Activated T-helper 1 cell treated with anti-CD3 and anti-CD28 coated beads, Interleukin-12 subunit alpha, Interleukin-12 subunit beta, Interleukin-2, Interleukin-4 antibody, amounts not matched to agents 30 ng/mL and 10 ng/mL and 1 ng/mL, durations not matched to agents 14 hours and 24 hours and 36 hours (primary cell): ENCODE measurements at regions of chr6 and their contacts with region 1.

Region 1: GRCh38 chr6:21873562-21873961 is 280.0 kb downstream of the SOX4 start:
- DNase-seq: no peak
- H3K4me3 Mint-ChIP-seq: no peak overlapping the region
- H3K27ac Mint-ChIP-seq: no peak overlapping the region
- H3K4me1 Mint-ChIP-seq: peaks cover 31% of the 10 kb centered on the region
- H3K27me3 Mint-ChIP-seq: no peaks in the 10 kb centered on the region

Region 2: GRCh38 chr6:20534295-20535262 is 1339.0 kb before region 1 on chr6 and contains the start of gene CDKAL1:
- intact Hi-C with region 1: loop called (anchors 10 kb)
- DNase-seq: peak; percentile 91
- H3K4me3 Mint-ChIP-seq: peak within 1 kb of the TSS; percentile 98
- H3K27ac Mint-ChIP-seq: peak within 1 kb of the TSS; percentile 97
- H3K4me1 Mint-ChIP-seq: peaks cover 54% of the 10 kb centered on the region
- H3K27me3 Mint-ChIP-seq: peaks cover 3% of the 10 kb centered on the region
- total RNA-seq, gene CDKAL1: 32.2 and 32.6 TPM in 2 replicates

Region 3: DNA sequence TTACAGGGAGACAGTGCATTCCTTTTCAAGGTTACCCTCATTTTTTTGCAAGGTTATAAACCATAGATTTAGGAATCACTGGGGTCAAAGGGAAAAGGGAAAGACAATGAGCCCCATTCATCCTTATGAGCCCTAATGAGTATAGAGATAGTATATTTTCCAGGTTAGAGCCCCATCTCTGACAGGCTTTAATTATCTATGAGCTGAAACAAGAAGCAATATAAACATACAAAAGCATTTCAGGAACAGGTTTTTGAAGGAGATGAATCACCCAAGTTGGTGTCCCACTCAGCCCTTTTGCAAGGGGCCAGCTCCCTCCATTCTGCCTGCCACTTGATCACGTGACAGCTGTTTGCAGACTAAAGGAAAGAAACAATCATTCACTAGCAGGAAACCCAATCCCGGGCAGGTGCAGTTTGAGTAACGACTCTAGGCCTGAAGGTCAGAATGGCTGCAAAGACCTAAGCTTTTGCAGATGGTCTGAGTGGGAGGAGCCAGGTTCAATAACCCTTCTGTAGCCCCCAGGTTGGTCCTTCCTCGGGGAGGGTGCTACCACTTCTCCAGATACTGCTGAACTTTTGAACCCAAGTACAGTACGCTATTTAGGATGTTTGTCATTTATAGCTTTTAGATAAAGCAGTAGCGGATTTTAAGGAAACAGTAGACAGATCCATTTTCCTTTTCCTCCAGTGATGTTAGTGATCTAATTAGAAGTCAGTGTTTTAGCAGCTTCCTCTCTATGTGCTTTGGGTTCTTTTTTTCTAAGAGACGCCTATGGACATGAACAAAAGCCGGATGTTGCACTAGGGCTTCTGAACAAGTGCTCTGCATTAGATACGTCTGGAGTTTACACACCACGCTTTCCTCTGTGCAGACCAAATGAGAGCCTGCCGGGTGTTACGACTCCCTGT is 26.8 kb before region 1 on chr6:
- intact Hi-C with region 1: loop called (anchors 1 kb)
- DNase-seq: no peak
- H3K4me3 Mint-ChIP-seq: no peak overlapping the region
- H3K27ac Mint-ChIP-seq: peak overlapping the region; percentile 13
- H3K4me1 Mint-ChIP-seq: peaks cover 21% of the 10 kb centered on the region
- H3K27me3 Mint-ChIP-seq: no peaks in the 10 kb centered on the region

Region 4: GRCh38 chr6:21928827-21929226 is 55.3 kb after region 1 on chr6:
- intact Hi-C with region 1: loop called (anchors 5 kb)
- DNase-seq: no peak
- H3K4me3 Mint-ChIP-seq: no peak overlapping the region
- H3K27ac Mint-ChIP-seq: no peak overlapping the region
- H3K4me1 Mint-ChIP-seq: peaks cover 33% of the 10 kb centered on the region
- H3K27me3 Mint-ChIP-seq: no peaks in the 10 kb centered on the region

Region 5: GRCh38 chr6:22068561-22069305 is 195.2 kb after region 1 on chr6:
- intact Hi-C with region 1: loop called (anchors 2 kb)
- DNase-seq: no peak
- H3K4me3 Mint-ChIP-seq: no peak overlapping the region
- H3K27ac Mint-ChIP-seq: peak overlapping the region; percentile 6
- H3K4me1 Mint-ChIP-seq: peaks cover 19% of the 10 kb centered on the region
- H3K27me3 Mint-ChIP-seq: peaks cover 2% of the 10 kb centered on the region